BJ (cell line): ENCODE measurements at regions of chr13 and their contacts with region 1.

Region 1: DNA sequence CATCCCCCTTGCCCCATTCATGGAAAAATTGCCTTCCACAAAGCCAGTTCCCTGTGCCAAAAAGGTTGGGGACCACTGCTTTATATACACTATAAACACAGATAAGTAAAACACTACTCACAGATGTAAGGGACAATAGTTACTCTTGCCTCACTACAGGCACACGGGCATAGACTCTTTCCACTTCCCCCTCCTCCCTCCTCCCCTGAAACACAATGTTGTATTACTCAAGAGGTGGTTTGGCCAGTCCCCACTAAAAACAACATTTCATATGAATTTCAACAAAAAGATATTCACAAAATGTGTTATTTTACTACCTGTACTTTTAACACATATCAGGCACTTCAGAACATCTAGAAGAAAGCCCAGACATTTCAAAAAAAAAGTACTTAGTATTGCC is 45.1 kb downstream of the EPSTI1 start:
- DNase-seq: no peak
- H3K4me3 ChIP-seq: no peak overlapping the region
- H3K27me3 ChIP-seq: no peaks in the 10 kb centered on the region
- CTCF ChIP-seq: no peak

Region 2: DNA sequence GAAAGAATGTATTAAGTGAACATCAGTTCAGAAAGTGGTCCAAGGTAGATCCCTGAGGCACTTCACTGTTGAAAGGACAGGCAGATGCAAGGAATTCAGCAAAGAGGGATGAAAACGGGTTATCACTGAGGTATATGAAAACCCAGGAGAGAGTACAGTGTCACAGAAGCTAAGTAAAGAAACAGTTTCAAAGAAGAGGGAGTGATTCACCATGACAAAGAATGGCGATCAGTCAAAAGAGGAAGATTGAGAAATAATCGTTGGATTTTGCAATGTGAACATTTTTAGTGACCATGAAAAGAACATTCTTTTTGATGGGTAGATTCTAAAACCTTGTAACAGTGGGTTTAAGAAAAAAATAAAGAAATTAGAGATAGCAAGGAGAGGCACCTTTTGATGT is 54.2 kb before region 1 on chr13:
- CTCF ChIA-PET with region 1: interaction called, 4 read pairs
- POLR2A ChIA-PET with region 1: interaction called, 10 read pairs
- DNase-seq: no peak
- H3K4me3 ChIP-seq: no peak overlapping the region
- H3K27me3 ChIP-seq: no peaks in the 10 kb centered on the region
- CTCF ChIP-seq: no peak

Region 3: DNA sequence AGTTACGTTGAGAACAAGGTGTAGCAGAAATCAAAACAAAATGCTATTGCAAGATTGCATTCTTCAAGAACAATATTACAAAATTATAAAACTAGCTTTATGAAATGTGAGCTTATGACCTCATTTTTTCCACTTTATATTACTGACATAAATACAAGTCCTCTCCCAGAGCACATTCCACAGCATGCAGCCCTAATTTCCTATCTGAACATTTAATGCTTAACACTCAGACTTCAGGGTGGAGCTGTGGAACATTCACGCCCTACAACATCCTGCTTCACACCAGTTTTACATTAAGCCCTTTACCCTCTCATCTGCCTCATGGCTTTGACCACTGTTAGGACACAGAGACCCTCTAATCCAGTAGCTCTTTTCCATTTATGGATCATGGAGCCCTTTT is 20.4 kb before region 1 on chr13:
- CTCF ChIA-PET with region 1: no interaction called
- POLR2A ChIA-PET with region 1: no interaction called
- DNase-seq: no peak
- H3K4me3 ChIP-seq: no peak overlapping the region
- H3K27me3 ChIP-seq: no peaks in the 10 kb centered on the region
- CTCF ChIP-seq: no peak

Region 4: GRCh38 chr13:42969558-42970172 is 22.7 kb after region 1 on chr13:
- CTCF ChIA-PET with region 1: interaction called, 16 read pairs
- POLR2A ChIA-PET with region 1: no interaction called
- DNase-seq: no peak
- H3K4me3 ChIP-seq: no peak overlapping the region
- H3K27me3 ChIP-seq: no peaks in the 10 kb centered on the region
- CTCF ChIP-seq: peak; percentile 79